Activated T-helper 1 cell treated with anti-CD3 and anti-CD28 coated beads, Interleukin-12 subunit alpha, Interleukin-12 subunit beta, Interleukin-2, Interleukin-4 antibody, amounts not matched to agents 30 ng/mL and 10 ng/mL and 1 ng/mL, durations not matched to agents 14 hours and 24 hours and 36 hours (primary cell): ENCODE measurements at regions of chrX and their contacts with region 1.

Region 1: DNA sequence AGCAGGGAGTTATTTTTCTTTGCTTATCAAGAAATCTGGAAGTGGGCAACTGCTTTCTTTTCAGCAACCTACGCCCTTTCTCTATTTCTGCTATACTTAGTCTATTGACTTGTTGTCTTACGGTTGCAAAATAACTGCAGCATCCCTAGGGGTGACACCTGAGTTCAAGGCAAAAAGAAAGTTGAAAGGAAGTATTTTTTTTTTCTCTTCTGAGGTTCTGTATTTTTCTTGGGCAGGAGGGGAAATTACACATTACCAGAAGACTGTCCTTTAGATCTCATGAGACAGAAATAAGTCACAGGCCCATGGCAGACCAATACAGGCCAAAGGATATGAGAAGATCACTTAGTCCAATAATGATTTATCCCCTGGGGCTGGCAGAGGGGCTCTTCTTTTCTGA is 204.7 kb upstream of the CASK start:
- DNase-seq: no peak
- H3K4me3 Mint-ChIP-seq: peak overlapping the region; percentile 4
- H3K27ac Mint-ChIP-seq: peak overlapping the region; percentile 72
- H3K4me1 Mint-ChIP-seq: peaks cover 68% of the 10 kb centered on the region
- H3K27me3 Mint-ChIP-seq: no peaks in the 10 kb centered on the region

Region 2: GRCh38 chrX:42020225-42020624 is 107.8 kb before region 1 on chrX:
- intact Hi-C with region 1: loop called (anchors 5 kb)
- DNase-seq: no peak
- H3K4me3 Mint-ChIP-seq: no peak overlapping the region
- H3K27ac Mint-ChIP-seq: no peak overlapping the region
- H3K4me1 Mint-ChIP-seq: peaks cover 13% of the 10 kb centered on the region
- H3K27me3 Mint-ChIP-seq: no peaks in the 10 kb centered on the region

Region 3: GRCh38 chrX:42093756-42094155 is 34.3 kb before region 1 on chrX:
- intact Hi-C with region 1: loop called (anchors 1 kb)
- DNase-seq: no peak
- H3K4me3 Mint-ChIP-seq: no peak overlapping the region
- H3K27ac Mint-ChIP-seq: peak overlapping the region; percentile 29
- H3K4me1 Mint-ChIP-seq: peaks cover 28% of the 10 kb centered on the region
- H3K27me3 Mint-ChIP-seq: no peaks in the 10 kb centered on the region